PC-3 (cell line): ENCODE measurements at regions of chr7 and their contacts with region 1.

Region 1: DNA sequence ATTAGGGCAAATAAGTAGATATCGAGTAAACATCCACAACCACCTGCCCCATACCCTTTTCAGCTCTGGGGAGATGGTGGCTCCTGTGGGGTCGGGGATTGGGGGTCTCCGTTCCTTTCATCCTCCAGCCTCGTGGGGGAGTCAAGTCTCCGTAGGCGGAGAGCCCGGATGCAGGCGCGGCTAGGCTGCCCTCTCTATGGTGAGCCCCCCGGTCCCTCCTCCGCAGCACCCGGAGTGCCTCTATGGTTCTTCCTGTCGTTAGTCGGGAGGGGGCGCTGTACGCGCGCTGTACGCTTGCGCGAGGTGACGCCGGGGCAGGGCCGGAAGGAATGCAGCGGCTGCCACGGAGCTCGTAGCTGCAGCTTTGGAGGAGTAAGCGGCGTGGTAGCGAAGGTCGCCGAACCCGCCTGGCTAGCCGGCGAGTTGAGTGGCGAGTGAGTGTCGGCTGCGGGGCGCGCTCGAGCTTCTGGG is 14.8 kb upstream of the MMD2 start:
- DNase-seq: peak; percentile 92
- ATAC-seq: peak; percentile 92
- H3K4me3 ChIP-seq: peak overlapping the region; percentile 77
- H3K27ac ChIP-seq: peak overlapping the region; percentile 66
- H3K4me1 ChIP-seq: no peaks in the 10 kb centered on the region; the same call in 1 of the 2 replicates
- H3K27me3 ChIP-seq: no peaks in the 10 kb centered on the region
- CTCF ChIP-seq: peak; percentile 80

Region 2: DNA sequence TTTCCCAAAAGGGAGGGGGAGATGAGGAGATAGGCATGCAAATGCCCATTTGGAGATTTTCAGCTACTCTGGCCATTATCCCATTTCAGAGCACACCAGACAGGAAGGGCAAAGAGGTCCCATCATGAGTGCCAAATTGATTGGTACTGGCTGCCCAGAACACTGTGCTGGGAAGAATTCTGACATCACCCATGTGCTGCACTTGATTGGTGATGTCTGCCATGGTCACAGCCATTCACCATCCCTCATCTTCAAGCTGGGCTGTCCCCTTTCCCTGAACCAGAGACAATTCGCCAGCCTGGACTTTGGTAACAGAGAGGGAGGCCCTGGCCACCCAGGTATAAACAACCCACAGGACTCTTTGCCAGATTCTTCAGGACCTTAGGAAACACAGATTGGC is 67.1 kb before region 1 on chr7:
- CTCF ChIA-PET with region 1: no interaction called
- POLR2A ChIA-PET with region 1: no interaction called
- intact Hi-C with region 1: no loop called
- DNase-seq: no peak
- ATAC-seq: no peak
- H3K4me3 ChIP-seq: no peak overlapping the region
- H3K27ac ChIP-seq: no peak overlapping the region
- H3K4me1 ChIP-seq: no peaks in the 10 kb centered on the region
- H3K27me3 ChIP-seq: peaks cover 5% of the 10 kb centered on the region; the same call in 1 of the 2 replicates
- CTCF ChIP-seq: no peak

Region 3: DNA sequence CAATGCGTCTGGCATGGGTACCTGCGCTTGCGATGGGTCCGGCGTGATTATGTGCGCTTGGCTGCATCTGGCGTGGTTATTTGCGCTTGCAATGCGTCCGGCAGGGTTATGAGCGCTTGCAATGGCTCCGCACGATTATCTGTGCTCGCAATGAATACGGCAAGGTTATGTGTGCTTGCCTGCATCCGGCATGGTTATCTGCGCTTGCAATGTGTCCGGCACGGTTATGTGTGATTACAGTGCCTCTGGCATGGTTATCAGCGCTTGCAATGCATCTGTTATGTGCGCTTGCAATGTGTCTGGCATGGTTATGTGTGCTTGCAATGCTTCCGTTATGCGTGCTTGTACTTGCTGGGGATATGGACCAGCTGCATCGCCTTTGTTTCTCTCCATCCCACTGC is 109.5 kb after region 1 on chr7:
- CTCF ChIA-PET with region 1: interaction called, 20 read pairs
- POLR2A ChIA-PET with region 1: interaction called, 12 read pairs
- intact Hi-C with region 1: loop called (anchors 2 kb)
- DNase-seq: no peak
- ATAC-seq: no peak
- H3K4me3 ChIP-seq: no peak overlapping the region
- H3K27ac ChIP-seq: no peak overlapping the region
- H3K4me1 ChIP-seq: no peaks in the 10 kb centered on the region
- H3K27me3 ChIP-seq: no peaks in the 10 kb centered on the region
- CTCF ChIP-seq: no peak

Region 4: DNA sequence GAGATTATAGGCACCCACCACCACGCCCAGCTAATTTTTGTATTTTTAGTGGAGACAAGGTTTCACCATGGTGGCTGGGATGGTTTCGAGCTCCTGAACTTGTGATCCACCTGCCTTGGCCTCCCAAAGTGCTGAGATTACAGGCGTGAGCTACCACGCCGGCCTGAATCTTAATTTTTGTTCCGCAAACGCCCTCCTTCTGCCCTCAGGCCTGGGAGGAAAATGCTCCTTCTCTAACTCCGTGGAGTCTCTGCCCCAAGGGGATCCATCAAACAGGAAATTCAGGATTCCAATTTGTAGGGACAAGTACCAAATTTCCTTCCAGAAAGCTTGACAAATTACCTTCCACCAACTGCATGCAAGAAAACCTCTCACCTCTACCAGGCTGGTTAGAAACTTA is 115.1 kb after region 1 on chr7:
- CTCF ChIA-PET with region 1: interaction called, 20 read pairs
- POLR2A ChIA-PET with region 1: interaction called, 12 read pairs
- intact Hi-C with region 1: loop called (anchors 2 kb)
- DNase-seq: peak; percentile 65
- ATAC-seq: peak; percentile 16; the same call in 1 of the 2 replicates
- H3K4me3 ChIP-seq: no peak overlapping the region
- H3K27ac ChIP-seq: no peak overlapping the region
- H3K4me1 ChIP-seq: peaks cover 5% of the 10 kb centered on the region; the same call in 1 of the 2 replicates
- H3K27me3 ChIP-seq: no peaks in the 10 kb centered on the region
- CTCF ChIP-seq: 0 out of 2 replicates have a peak, but pooled peaks have one; percentile 9